Activated CD8-positive, alpha-beta T cell treated with anti-CD3 and anti-CD28 coated beads for 36 hours (primary cell): ENCODE measurements at regions of chr10 and their contacts with region 1.

Region 1: DNA sequence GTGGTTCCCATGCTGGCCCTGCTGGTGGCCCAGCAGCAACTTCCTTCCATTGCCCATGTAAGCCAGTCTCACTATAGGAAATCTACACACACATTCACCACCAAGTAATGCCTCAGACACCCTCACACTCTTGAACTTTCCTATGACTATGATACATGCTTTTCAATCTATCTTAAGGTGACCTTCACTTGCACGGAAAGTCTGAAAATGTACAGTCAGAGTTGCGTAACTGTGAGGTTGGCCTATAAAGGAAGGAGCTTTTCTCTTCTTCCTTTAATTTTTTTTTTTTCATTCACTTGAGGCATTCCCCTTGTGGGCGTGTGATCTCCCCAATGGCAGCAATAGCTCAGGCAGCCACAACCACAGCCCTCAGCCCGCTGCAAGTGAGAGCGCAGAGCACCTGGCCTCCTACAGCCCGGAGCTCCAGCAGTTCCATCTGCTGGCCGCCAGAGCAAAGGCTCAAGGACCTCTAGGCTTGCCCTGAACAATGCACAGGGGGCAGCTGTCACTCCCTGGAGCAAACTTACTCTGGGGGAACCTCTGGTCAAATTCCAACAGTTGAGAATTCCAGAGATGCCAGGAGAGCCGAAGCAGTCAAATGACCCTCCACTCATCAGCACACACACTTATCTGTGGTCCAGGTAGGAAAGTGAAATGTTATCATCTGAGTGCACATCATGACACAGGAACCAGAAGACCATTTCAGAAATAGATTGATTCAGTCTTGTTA is 123.1 kb upstream of the ADO start:
- DNase-seq: peak; percentile 95
- ATAC-seq: peak; percentile 93
- H3K4me3 Mint-ChIP-seq: no peak overlapping the region
- H3K27ac Mint-ChIP-seq: peak overlapping the region; percentile 89
- H3K4me1 Mint-ChIP-seq: peaks cover 40% of the 10 kb centered on the region
- H3K27me3 Mint-ChIP-seq: no peaks in the 10 kb centered on the region
- CTCF ChIP-seq: peak; percentile 72

Region 2: DNA sequence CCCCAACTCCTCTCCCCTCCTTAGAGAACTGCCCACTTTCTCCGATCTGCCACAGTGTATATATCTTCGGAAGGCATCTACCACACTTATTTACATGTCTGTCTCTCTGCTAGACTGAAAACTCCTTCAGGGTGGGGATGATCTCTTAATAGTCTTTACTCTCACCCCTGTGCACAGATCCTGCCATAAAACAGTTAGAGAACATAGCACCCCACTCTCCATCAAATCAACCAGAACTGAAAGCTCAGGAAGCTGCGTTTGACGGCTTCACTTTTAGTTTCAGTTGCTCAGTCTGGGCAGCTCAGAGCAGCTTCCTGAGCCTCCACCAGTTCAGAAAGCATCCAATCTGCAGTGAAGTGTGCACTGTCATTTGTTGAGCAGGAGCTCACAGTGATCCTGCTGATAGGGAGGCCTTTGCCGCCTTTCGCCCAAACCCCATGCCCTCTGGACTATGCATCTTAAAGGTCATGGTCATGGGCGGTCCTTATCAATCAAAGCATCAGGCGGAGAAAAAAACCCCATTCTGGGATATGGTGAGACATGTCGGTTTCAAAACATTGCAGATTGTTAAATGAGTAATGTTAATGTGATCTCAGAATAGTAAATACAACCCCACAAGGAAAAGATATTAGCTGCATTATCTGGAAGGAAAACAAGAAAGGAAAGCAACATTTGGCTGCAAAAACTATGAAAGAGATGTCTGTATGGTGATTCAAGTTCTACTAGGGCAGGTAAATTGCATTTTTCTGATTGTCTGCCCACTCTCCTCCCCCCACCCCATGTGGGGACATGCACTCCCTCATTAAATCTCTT is 43.9 kb before region 1 on chr10:
- CTCF ChIA-PET with region 1: interaction called, 6 read pairs
- POLR2A ChIA-PET with region 1: interaction called, 11 read pairs
- intact Hi-C with region 1: loop called (anchors 1 kb)
- DNase-seq: peak; percentile 90
- ATAC-seq: peak; percentile 93
- H3K4me3 Mint-ChIP-seq: no peak overlapping the region
- H3K27ac Mint-ChIP-seq: no peak overlapping the region
- H3K4me1 Mint-ChIP-seq: peaks cover 25% of the 10 kb centered on the region
- H3K27me3 Mint-ChIP-seq: no peaks in the 10 kb centered on the region
- CTCF ChIP-seq: no peak

Region 3: DNA sequence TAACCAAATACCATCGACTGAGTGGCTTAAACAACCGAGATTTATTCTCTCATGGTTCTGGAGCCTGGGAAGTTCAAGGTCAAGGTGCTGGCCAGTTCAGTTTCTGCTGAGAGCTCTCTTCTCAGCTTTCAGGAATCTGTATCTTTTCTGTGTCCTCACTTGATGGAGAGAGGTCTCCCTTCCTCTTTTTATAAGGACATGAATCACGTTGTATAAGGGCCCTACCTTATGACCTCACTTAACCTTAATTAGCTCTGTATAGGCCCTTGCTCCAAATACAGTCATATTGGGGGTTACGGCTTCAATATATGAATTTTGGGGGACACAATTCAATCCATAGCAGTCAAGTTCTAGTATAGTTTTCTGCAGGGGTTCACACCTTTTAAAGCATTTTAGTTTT is 12.0 kb before region 1 on chr10:
- CTCF ChIA-PET with region 1: interaction called, 11 read pairs
- POLR2A ChIA-PET with region 1: interaction called, 3 read pairs
- intact Hi-C with region 1: no loop called
- DNase-seq: no peak
- ATAC-seq: no peak
- H3K4me3 Mint-ChIP-seq: no peak overlapping the region
- H3K27ac Mint-ChIP-seq: no peak overlapping the region
- H3K4me1 Mint-ChIP-seq: peaks cover 13% of the 10 kb centered on the region
- H3K27me3 Mint-ChIP-seq: no peaks in the 10 kb centered on the region
- CTCF ChIP-seq: no peak

Region 4: DNA sequence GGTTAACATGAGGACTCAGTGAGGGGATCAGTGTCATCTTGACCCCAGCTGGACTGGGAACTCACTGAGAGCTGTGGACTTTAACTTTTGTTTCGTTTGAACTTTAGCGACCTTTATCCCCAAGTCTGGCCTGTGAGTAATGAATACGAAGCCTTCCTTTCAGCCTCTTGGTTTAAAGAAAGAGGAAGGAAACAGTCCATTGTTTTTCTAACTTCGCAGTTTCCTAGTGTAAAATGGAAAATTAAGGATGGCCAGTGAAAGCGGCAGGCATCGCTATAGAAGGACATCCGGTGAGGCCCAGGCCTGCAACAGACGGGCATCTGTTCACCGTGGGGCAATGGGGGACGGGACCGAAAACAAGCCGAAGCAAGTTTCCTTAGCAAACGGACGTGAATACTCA is 79.0 kb after region 1 on chr10:
- CTCF ChIA-PET with region 1: interaction called, 15 read pairs
- POLR2A ChIA-PET with region 1: no interaction called
- intact Hi-C with region 1: no loop called
- DNase-seq: no peak
- ATAC-seq: no peak
- H3K4me3 Mint-ChIP-seq: no peak overlapping the region
- H3K27ac Mint-ChIP-seq: no peak overlapping the region
- H3K4me1 Mint-ChIP-seq: peaks cover 29% of the 10 kb centered on the region
- H3K27me3 Mint-ChIP-seq: no peaks in the 10 kb centered on the region
- CTCF ChIP-seq: no peak

Region 5: DNA sequence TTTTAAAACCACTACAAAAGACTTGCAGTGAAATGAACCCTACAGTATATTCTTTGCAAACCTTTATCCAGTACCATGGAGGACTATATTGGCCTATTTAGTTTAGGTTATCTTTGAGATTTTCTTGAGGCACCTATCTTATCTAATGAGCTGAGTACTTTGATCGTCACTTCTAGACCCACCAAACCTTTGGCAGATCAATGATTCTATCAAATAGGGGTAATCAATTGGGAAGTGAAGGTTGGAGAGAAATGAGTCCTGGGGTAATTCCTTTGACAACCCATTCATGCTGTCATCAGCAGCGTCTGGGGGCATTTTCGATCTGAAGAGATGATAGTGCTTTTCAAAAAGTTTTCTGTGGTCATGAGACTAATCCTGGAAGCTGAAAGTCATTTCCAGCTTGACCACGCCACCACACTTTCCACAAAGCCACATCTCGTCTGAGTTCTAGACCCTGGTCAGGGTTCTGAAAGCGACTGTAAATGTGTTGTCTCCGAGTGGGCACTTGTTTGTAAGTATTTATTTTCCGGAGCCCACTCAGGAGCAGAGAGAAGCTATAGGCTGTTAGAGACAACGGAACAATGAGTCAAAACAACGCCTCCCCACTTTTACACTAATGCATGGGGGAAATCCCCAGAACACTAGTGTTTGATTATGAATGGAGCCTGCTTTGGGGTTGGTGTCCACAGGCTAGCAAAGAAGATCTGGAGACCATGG is 129.9 kb after region 1 on chr10:
- CTCF ChIA-PET with region 1: interaction called, 33 read pairs
- POLR2A ChIA-PET with region 1: interaction called, 20 read pairs
- intact Hi-C with region 1: loop called (anchors 1 kb)
- DNase-seq: peak; percentile 96
- ATAC-seq: peak; percentile 47
- H3K4me3 Mint-ChIP-seq: peak overlapping the region; percentile 97
- H3K27ac Mint-ChIP-seq: peak overlapping the region; percentile 67
- H3K4me1 Mint-ChIP-seq: peaks cover 73% of the 10 kb centered on the region
- H3K27me3 Mint-ChIP-seq: no peaks in the 10 kb centered on the region
- CTCF ChIP-seq: no peak